Activated CD4-positive, alpha-beta T cell treated with anti-CD3 and anti-CD28 coated beads, Interleukin-2, amount 10 ng/mL, durations not matched to agents 24 days and 14 days (primary cell): ENCODE measurements at regions of chr19 and their contacts with region 1.

Region 1: GRCh38 chr19:41531438-41532311 is 44.3 kb upstream of the CEACAM21 start:
- DNase-seq: peak; percentile 96
- H3K4me3 Mint-ChIP-seq: peak overlapping the region; percentile 84
- H3K27ac Mint-ChIP-seq: peak overlapping the region; percentile 88
- H3K4me1 Mint-ChIP-seq: peaks cover 61% of the 10 kb centered on the region
- H3K27me3 Mint-ChIP-seq: peaks cover 4% of the 10 kb centered on the region

Region 2: GRCh38 chr19:41363753-41364523 is 167.7 kb before region 1 on chr19 and contains the start of gene B9D2:
- intact Hi-C with region 1: loop called (anchors 5 kb)
- DNase-seq: peak; percentile 99
- H3K4me3 Mint-ChIP-seq: peak within 1 kb of the TSS; percentile 93
- H3K27ac Mint-ChIP-seq: peak within 1 kb of the TSS; percentile 99
- H3K4me1 Mint-ChIP-seq: peaks cover 28% of the 10 kb centered on the region
- H3K27me3 Mint-ChIP-seq: no peaks in the 10 kb centered on the region
- total RNA-seq, gene B9D2: 6.3 and 8.6 TPM in 2 replicates

Region 3: DNA sequence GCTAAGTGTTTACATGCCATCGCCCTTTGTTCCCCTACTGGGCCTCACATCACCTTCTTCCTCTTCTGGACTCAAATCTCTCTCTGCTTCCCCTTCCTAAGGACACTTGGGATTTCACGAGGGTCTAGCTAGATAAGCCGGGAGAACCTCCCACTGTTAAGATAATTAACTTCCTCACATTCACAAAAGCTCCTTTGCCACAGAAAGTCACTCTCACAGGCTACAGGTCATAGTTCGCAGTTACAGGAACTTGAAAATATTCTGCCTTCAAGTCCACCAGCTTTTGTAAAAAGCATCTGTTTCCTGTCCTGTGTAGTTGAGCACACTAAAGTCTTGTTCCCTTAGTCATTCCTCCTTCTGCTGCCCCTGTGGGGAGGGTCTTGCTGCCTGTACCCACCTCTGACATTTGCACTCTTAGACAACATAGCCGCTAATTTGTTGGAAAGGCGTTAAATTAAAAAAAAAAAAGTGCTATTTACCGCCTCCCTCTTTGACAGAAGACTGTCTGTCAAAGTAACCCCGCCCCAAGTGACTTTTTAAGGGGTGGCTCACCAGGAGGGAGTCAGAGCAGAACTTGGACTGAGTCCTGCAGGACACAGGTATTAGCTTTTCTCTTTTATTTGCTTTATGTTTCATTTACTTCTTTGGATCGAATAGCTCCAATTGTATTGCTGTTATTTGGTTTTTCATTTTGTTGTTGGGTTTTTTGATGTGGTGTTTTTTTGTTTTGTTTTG is 17.4 kb after region 1 on chr19:
- intact Hi-C with region 1: loop called (anchors 2 kb)
- DNase-seq: peak; percentile 95
- H3K4me3 Mint-ChIP-seq: peak overlapping the region; percentile 99
- H3K27ac Mint-ChIP-seq: peak overlapping the region; percentile 99
- H3K4me1 Mint-ChIP-seq: peaks cover 67% of the 10 kb centered on the region
- H3K27me3 Mint-ChIP-seq: no peaks in the 10 kb centered on the region

Region 4: DNA sequence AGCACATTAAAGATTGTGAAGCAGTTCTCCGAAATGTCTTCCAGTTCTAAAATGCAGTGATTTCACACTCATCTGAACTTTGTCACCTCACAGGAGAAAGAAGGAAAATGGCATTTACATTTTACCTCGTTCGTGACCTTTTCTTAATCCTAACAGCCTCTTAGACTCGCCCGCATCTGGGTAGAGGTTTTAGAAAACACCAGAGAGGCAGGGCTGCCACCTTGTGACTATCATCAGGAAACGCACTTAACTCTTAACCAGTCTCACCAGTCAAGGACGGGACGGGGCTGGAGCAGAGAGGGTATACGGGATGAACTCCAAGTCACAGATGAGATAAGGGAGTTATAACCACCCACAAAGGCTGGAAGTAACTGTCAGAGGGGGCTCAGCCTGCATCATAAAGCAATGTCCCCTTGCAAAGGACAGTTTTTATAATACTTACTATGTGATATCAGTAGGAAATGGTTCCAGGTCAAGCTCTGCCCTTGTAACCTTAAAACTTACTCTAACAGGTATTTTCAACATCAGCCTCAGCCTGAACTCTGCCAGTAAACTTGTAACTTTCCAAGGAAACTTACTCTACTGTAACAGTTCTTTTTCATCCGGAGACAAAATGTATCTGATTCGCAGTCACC is 215.0 kb after region 1 on chr19:
- intact Hi-C with region 1: loop called (anchors 5 kb)
- DNase-seq: peak; percentile 83
- H3K4me3 Mint-ChIP-seq: no peak overlapping the region
- H3K27ac Mint-ChIP-seq: no peak overlapping the region
- H3K4me1 Mint-ChIP-seq: peaks cover 1% of the 10 kb centered on the region
- H3K27me3 Mint-ChIP-seq: peaks cover 66% of the 10 kb centered on the region